ENCODE measurements at regions of chr1 and their contacts with region 1.

Region 1: GRCh38 chr1:206734499-206735142 is 36.0 kb upstream of the IL19 start:
- DNase-seq: peak; percentile 88
- H3K4me3 Mint-ChIP-seq: no peak overlapping the region
- H3K27ac Mint-ChIP-seq: no peak overlapping the region
- H3K4me1 Mint-ChIP-seq: peaks cover 53% of the 10 kb centered on the region
- H3K27me3 Mint-ChIP-seq: no peaks in the 10 kb centered on the region

Region 2: DNA sequence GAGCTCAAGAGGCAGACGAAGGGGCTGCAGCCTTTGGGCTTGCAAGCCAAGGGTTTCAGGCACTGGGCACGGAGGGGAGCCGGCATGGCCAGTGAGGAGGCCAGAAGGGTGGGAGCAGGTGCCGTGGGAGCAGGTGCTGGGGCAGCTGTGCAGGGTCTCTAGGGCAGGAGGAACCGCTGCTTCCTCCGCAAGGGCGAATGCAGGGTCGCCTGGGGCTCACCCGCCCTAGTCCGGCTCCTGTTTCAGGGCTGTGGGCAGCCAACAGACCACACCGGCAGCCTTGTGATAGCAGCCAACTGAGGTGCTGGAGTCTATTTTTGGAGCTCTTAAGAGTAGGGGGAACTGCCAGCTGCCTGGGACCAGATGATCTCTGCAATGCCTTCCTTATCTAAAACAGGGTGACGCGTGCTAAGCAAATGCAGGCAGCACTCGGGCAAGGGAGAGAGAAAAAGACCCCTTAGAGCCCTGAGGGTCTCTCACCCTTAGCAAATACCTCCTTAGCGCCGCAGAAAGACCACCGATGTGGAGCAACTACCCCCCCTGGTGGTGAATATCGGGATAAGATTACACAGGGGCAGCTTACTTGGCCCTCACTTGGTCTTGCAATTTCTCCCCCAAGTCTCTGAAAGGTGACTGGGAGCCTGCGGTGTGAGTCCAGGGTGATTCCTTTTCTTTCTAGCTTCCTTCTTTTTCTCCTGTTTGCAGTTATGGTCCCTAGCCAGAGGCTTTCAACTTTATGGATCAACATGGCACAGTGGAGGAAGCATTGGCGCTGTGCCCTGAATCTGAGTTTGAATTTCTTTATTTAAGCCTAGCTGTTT is 70.6 kb before region 1 on chr1:
- CTCF ChIA-PET with region 1: interaction called, 13 read pairs
- intact Hi-C with region 1: no loop called
- DNase-seq: peak; percentile 87
- H3K4me3 Mint-ChIP-seq: peak overlapping the region; percentile 10
- H3K27ac Mint-ChIP-seq: no peak overlapping the region
- H3K4me1 Mint-ChIP-seq: peaks cover 38% of the 10 kb centered on the region
- H3K27me3 Mint-ChIP-seq: peaks cover 18% of the 10 kb centered on the region

Region 3: DNA sequence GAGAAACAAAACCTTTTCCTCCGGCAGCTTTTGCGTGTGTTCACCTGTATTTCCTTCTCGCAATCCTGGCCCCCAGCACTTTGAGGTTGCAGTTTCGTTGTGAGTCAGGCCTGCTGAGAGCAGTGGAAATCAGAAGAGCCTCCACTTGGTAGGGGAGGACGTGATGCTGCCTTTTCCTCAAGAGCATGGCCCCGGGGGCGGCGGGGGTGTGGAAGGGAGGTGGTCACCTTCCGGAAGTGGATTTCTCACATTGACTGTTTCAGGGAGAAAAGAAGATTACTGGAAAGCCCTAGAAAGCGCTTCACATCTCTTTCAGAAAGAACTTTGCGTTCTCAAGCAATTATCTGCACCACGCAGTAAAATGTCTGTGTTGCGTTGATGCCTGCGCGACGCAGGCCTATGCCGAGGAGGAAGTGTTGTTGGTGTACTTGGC is 49.9 kb after region 1 on chr1:
- CTCF ChIA-PET with region 1: interaction called, 5 read pairs
- intact Hi-C with region 1: loop called (anchors 1 kb)
- DNase-seq: peak; percentile 98
- H3K4me3 Mint-ChIP-seq: no peak overlapping the region
- H3K27ac Mint-ChIP-seq: peak overlapping the region; percentile 62
- H3K4me1 Mint-ChIP-seq: peaks cover 50% of the 10 kb centered on the region
- H3K27me3 Mint-ChIP-seq: peaks cover 7% of the 10 kb centered on the region

Region 4: DNA sequence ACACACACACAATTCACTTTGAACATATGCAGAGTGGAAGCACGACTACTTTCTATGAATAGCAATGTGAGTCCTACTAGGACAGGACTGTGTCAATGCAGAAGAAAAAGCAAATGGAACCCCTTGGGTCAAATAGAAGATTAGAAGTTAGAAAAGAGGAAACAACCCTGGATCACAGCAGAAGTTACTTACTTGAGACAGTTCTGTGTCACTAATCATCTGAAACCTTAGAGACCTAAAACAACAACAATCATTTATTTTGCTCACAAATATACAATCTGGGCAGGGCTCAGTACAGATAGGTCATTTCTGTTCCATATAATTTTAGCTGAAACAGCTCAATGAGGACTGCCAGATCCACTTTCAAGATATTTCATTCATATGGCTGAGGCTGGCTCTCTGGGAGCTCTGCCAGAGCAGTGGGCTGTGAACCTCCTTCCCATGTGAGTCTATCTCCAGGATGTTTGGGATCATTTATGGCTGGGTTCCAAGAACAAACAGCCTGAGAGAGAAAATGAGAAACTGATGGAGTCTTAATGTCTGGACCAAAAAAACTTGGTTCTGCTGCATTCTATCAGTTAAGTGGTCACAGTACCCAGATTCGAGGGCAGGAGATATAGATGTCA is 80.2 kb after region 1 on chr1:
- CTCF ChIA-PET with region 1: interaction called, 232 read pairs
- intact Hi-C with region 1: no loop called
- DNase-seq: no peak
- H3K4me3 Mint-ChIP-seq: no peak overlapping the region
- H3K27ac Mint-ChIP-seq: no peak overlapping the region
- H3K4me1 Mint-ChIP-seq: peaks cover 21% of the 10 kb centered on the region
- H3K27me3 Mint-ChIP-seq: no peaks in the 10 kb centered on the region

Region 5: DNA sequence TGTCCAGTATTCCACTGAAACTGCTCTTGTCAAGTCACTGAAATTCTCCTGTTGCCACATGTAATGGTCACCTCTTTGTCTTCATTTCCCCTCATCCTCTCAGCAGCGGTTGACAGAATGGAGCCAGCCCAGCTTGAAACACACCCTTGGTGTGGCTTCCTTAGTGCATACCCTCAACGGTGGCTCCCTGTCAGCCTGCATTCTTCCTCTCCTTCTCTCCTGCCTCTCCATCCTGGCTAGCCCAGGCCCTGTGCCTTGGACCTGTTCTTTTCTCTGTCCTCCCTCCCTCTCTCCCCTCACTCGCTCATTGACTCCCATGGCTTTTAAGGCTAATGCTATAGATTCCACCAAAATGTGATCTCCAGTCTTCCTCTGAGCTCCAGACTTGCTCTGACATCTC is 183.5 kb after region 1 on chr1:
- CTCF ChIA-PET with region 1: interaction called, 100 read pairs
- intact Hi-C with region 1: no loop called
- DNase-seq: no peak
- H3K4me3 Mint-ChIP-seq: peak overlapping the region; percentile 59
- H3K27ac Mint-ChIP-seq: peak overlapping the region; percentile 82
- H3K4me1 Mint-ChIP-seq: peaks cover 51% of the 10 kb centered on the region
- H3K27me3 Mint-ChIP-seq: no peaks in the 10 kb centered on the region

Region 6: DNA sequence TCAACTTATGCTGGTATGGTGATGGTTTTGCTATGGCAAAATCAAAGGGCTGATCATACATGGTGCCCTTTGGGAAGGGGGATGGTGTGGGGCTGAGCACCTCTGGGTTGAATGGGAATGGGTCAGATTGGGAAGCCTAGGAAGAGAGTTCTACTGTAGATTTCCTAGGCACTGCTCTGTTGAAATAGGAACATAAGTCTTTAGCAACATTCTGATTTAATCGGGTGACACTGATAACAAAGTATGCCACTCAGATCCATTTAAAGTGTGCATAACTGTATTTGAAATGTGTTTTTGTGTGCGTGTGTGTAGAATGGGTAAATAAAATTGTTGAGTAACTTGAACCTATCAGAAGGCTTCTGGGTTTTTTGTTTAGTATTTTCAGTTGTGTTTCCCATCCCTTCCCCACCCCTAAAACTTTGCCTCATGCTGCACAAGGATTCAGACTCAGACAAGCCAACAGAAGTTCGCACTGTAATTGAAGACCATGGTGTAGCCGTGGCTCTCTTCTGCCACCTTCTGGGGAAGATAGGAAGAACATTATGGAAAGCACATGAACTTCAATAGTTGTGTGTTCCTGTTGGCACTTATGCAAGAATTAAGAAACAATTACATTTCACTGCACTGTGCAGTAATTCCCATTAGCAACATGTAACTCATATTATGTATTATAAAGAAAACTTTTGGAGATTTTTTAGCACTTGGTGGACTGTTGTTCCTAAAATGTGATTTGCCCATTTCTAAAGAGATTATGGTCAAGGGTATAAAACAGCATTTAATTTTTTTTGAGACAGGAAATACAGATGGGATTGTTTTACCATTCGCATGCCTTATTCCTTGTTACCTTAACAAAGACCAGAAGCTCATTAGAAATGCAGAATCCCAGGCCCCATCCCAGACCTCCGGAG is 343.1 kb after region 1 on chr1:
- CTCF ChIA-PET with region 1: no interaction called
- intact Hi-C with region 1: loop called (anchors 1 kb)
- DNase-seq: peak; percentile 82
- H3K4me3 Mint-ChIP-seq: no peak overlapping the region
- H3K27ac Mint-ChIP-seq: no peak overlapping the region
- H3K4me1 Mint-ChIP-seq: no peaks in the 10 kb centered on the region
- H3K27me3 Mint-ChIP-seq: no peaks in the 10 kb centered on the region